Heart left ventricle (tissue), 16 donors: ENCODE measurements at regions of chr16 and their contacts with region 1.

Region 1: DNA sequence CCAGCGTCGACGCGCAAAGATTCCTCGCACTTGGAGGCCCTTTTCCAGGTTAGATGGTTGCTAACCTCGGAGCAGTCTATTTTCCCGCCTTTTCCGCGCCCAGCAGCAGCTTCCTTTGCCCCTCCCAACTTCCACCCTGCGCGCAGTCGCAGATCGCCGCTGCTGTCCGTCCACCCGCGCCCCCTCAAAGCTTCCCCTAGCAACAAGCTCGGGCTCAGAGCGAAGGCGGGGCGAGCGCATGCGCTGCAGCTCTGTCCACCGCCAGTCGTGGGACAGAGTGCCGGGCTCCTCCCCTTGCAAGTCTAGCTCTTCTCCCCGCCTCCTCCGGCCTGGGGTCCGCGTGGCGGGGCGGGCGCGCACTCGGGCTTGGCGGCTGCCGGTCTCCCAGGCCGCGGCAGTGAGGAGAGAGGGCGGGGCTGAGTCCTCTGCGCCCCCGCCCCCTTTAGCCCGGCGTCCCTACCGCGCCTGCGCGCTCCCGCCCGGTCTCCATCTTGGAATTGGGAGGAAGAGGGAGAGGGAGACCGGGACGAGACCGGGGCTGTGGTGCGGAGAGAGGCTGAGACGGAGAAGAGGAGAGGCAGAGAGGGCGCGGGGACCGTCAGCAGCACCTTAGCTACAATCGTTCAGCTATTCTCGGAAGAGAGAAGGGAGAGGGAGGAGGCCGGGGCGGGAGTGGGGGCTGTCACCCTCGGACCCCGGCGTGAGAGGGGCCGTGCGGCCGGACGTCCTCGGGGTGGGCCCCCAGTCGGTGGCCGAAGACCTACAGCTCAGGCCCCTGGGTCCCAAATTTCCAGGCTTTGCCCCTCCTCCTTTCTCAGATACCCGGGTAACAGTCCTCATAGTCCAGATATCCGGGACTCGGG is at the start of gene TAOK2:
- DNase-seq: peak; percentile 99 to 100 (median 99)
- ATAC-seq: peak; percentile 95 to 98 (median 97)
- H3K4me3 ChIP-seq: peak within 1 kb of the TSS; percentile 66 to 98 (median 90)
- H3K27ac ChIP-seq: peak within 1 kb of the TSS; percentile 87 to 99 (median 96)
- H3K4me1 ChIP-seq: peaks cover 0 to 54% (median 37%) of the 10 kb centered on the region in 12 donors
- H3K27me3 ChIP-seq: no peaks in the 10 kb centered on the region
- CTCF ChIP-seq: no peak
- POLR2A ChIP-seq: peak; percentile 65 to 95
- total RNA-seq, gene TAOK2: 29.5 to 47.9 (median 35.1) TPM

Region 2: GRCh38 chr16:29805378-29806098 is 168.1 kb before region 1 on chr16:
- intact Hi-C with region 1: loop called in 2 of 10 experiments (anchors 5 kb)
- DNase-seq: peak; percentile 98 to 99 (median 98)
- ATAC-seq: peak; percentile 84 to 89 (median 88)
- H3K4me3 ChIP-seq: peak overlapping the region; percentile 65 to 98 (median 83)
- H3K27ac ChIP-seq: peak overlapping the region; percentile 95 to 100 (median 99)
- H3K4me1 ChIP-seq: peaks cover 3 to 47% (median 42%) of the 10 kb centered on the region in 12 donors
- H3K27me3 ChIP-seq: no peaks in the 10 kb centered on the region
- CTCF ChIP-seq: no peak
- POLR2A ChIP-seq: peak in 1 of 2 donors; percentile 81

Region 3: DNA sequence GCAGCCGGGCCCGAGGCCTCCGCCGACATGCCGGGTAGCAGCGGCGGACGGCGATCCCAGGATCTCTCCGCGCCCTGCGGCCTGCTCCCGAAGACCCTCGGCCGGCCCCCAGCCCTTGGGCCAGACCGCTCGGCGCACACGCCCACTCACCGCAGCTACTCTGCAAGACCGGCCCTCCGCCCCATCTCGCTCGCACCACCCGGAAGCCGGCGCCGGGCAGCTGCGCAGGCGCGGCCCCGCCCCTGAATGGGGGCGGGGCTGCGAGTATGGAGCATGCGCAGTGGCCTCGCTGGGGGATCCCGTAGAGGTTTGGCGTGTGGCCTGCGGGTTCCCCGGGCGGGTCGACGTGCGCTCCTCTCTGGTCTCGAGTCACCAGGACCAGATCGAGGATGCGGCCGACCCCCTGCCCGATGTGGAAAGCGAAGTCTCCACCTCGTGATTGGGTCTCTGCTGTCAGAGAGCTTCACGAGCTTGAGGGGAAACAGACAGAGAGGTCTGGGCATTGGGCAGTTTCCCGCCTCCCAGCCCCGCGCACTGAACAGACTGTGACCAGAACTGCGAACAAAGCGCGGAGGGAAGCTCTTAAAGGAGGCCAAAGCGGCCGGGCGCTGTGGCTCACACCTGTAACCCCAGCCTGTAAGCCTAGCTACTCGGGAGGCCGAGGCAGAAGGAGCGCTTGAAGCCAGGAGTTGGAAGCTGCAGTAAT is 47.5 kb before region 1 on chr16 and contains the start of gene KCTD13:
- intact Hi-C with region 1: loop called in 3 of 10 experiments (anchors 1 to 5 kb)
- DNase-seq: peak; percentile 85 to 95 (median 89)
- ATAC-seq: peak; percentile 89 to 99 (median 99)
- H3K4me3 ChIP-seq: peak within 1 kb of the TSS; percentile 72 to 100 (median 92)
- H3K27ac ChIP-seq: peak within 1 kb of the TSS; percentile 72 to 96 (median 88)
- H3K4me1 ChIP-seq: peaks cover 4 to 27% (median 18%) of the 10 kb centered on the region in 12 donors
- H3K27me3 ChIP-seq: no peaks in the 10 kb centered on the region
- CTCF ChIP-seq: no peak
- POLR2A ChIP-seq: peak in 1 of 2 donors; percentile 93
- total RNA-seq, gene KCTD13: 3.6 to 9.1 (median 7.2) TPM

Region 4: GRCh38 chr16:29990888-29991549 is 17.4 kb after region 1 on chr16:
- intact Hi-C with region 1: loop called in 6 of 10 experiments (anchors 1 to 2 kb)
- DNase-seq: no peak
- ATAC-seq: no peak
- H3K4me3 ChIP-seq: no peak overlapping the region
- H3K27ac ChIP-seq: peak overlapping the region in 1 of 12 donors; percentile 17
- H3K4me1 ChIP-seq: peaks cover 0 to 21% (median 11%) of the 10 kb centered on the region in 12 donors
- H3K27me3 ChIP-seq: no peaks in the 10 kb centered on the region
- CTCF ChIP-seq: no peak
- POLR2A ChIP-seq: no peak

Region 5: GRCh38 chr16:30650369-30651123 is 676.9 kb after region 1 on chr16 and contains the start of gene PRR14:
- intact Hi-C with region 1: loop called in 1 of 10 experiments (anchors 5 kb)
- DNase-seq: peak; percentile 100
- ATAC-seq: peak; percentile 92 to 95 (median 93)
- H3K4me3 ChIP-seq: peak within 1 kb of the TSS; percentile 60 to 93 (median 76)
- H3K27ac ChIP-seq: peak within 1 kb of the TSS; percentile 69 to 99 (median 95)
- H3K4me1 ChIP-seq: peaks cover 0 to 26% (median 14%) of the 10 kb centered on the region in 12 donors
- H3K27me3 ChIP-seq: no peaks in the 10 kb centered on the region
- CTCF ChIP-seq: peak in 10 of 12 donors; percentile 19 to 54 (median 34)
- POLR2A ChIP-seq: peak in 1 of 2 donors; percentile 32
- total RNA-seq, gene PRR14: 12.3 to 26.6 (median 20.2) TPM